ENCODE measurements at regions of chr5 and their contacts with region 1.

Region 1: GRCh38 chr5:149387081-149387631 is 8.1 kb upstream of the IL17B start:
- DNase-seq: peak in 3 of 5 donors; percentile 55 to 68 (median 55)
- ATAC-seq: no peak
- H3K4me3 ChIP-seq: no peak overlapping the region
- H3K27ac ChIP-seq: peak overlapping the region; percentile 51 to 98 (median 90)
- H3K4me1 ChIP-seq: peaks cover 8 to 91% (median 56%) of the 10 kb centered on the region in 12 donors
- H3K27me3 ChIP-seq: no peaks in the 10 kb centered on the region
- CTCF ChIP-seq: no peak
- POLR2A ChIP-seq: no peak

Region 2: GRCh38 chr5:149268928-149269557 is 118.1 kb before region 1 on chr5:
- intact Hi-C with region 1: no loop called
- DNase-seq: no peak
- ATAC-seq: no peak
- H3K4me3 ChIP-seq: no peak overlapping the region
- H3K27ac ChIP-seq: peak overlapping the region in 5 of 12 donors; percentile 7 to 50 (median 39)
- H3K4me1 ChIP-seq: peaks cover 0 to 29% (median 17%) of the 10 kb centered on the region in 12 donors
- H3K27me3 ChIP-seq: peaks cover 0 to 24% (median 0%) of the 10 kb centered on the region in 9 donors
- CTCF ChIP-seq: peak; percentile 56 to 92 (median 75)
- POLR2A ChIP-seq: no peak

Region 3: GRCh38 chr5:149422366-149423048 is 35.4 kb after region 1 on chr5:
- intact Hi-C with region 1: loop called in 4 of 10 experiments (anchors 2 to 5 kb)
- DNase-seq: peak; percentile 85 to 91 (median 88)
- ATAC-seq: peak; percentile 67 to 81 (median 72)
- H3K4me3 ChIP-seq: peak overlapping the region in 7 of 12 donors; percentile 6 to 58 (median 16)
- H3K27ac ChIP-seq: peak overlapping the region; percentile 84 to 98 (median 92)
- H3K4me1 ChIP-seq: peaks cover 2 to 96% (median 66%) of the 10 kb centered on the region in 12 donors
- H3K27me3 ChIP-seq: no peaks in the 10 kb centered on the region
- CTCF ChIP-seq: no peak
- POLR2A ChIP-seq: no peak